Spleen (tissue), 13 donors: ENCODE measurements at regions of chr2 and their contacts with region 1.

Region 1: DNA sequence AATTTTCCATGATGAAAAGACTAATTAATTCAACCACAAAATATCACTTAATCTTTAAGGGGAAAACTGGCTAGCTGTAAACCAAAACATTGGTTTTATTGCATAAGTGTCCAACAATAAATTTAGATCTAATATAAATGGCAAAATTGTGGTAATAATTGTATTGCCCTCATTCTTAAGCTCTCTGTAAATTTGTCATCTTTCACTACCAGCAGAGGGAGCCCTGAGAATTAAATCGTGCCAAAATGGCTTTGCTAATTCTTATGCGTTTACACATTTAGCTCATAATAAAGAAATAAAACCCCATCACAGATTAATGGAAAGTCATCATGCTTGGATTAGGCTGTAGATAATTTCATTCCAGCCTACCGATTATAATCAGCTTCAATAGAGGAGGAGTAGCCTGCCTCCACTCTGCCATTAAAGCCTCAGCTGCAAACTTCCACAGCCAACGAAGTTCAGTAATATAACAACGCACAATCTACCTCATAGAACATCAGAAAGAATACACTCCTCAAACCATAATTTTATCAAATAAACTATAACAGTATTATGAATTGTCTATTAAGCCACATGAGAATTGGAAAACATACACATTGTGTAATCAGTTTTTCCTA is 70.0 kb upstream of the ATP5MC3 start:
- DNase-seq: no peak
- H3K4me3 ChIP-seq: no peak overlapping the region
- H3K27ac ChIP-seq: no peak overlapping the region
- H3K4me1 ChIP-seq: no peaks in the 10 kb centered on the region
- H3K27me3 ChIP-seq: peaks cover 0 to 33% (median 0%) of the 10 kb centered on the region in 7 donors
- CTCF ChIP-seq: peak in 8 of 11 experiments; percentile 21 to 56 (median 44)
- POLR2A ChIP-seq: no peak

Region 2: GRCh38 chr2:174561283-174561971 is 690.1 kb before region 1 on chr2:
- intact Hi-C with region 1: no loop called
- DNase-seq: no peak
- H3K4me3 ChIP-seq: no peak overlapping the region
- H3K27ac ChIP-seq: peak overlapping the region in 4 of 8 donors; percentile 17 to 31 (median 24)
- H3K4me1 ChIP-seq: peaks cover 0 to 14% (median 2%) of the 10 kb centered on the region in 6 donors
- H3K27me3 ChIP-seq: no peaks in the 10 kb centered on the region
- CTCF ChIP-seq: no peak
- POLR2A ChIP-seq: no peak

Region 3: GRCh38 chr2:175309799-175310198 is 58.3 kb after region 1 on chr2:
- intact Hi-C with region 1: no loop called
- DNase-seq: no peak
- H3K4me3 ChIP-seq: no peak overlapping the region
- H3K27ac ChIP-seq: no peak overlapping the region
- H3K4me1 ChIP-seq: no peaks in the 10 kb centered on the region
- H3K27me3 ChIP-seq: peaks cover 0 to 17% (median 0%) of the 10 kb centered on the region in 7 donors
- CTCF ChIP-seq: no peak
- POLR2A ChIP-seq: no peak

Region 4: DNA sequence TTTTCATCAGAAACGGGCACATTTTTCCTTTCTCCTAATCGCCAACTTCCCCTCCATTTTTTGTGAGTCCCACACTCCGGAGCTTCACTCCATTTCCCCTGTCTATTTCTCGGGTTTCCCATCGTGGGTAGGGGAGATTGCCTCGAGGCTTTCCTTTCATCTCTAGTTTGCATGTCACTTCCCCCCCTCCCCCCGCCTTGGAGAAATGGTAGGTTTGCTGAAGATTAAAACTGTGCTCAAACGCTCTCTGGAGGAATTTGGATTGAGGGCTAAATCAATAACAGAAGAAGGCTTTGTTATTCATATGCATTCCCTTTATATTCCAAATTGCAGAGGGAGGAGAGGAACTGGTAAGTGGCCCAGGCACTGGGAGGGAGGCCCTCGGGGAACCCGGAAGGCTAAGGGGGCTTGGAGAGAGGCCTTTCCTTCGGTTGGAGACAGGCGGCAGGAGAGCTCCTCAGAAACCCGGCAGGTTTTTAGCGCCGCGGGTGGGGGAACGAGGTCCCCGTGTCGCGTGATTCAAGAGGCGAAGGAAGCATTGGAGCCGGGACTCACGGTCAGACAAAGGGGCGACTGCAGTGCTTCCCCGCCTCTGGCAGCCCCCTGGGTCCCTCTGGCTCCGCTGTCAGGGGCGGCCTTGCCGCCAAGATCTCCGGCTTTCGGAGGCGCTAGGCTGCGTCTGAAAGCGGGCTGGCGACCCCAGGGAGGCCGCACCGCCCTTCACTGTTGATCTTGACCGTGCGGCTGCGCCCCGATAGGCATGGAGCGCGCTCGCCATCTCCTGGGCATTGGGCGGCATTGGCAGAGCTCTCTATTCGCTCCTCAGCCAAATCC is 845.7 kb after region 1 on chr2:
- intact Hi-C with region 1: loop called (anchors 5 kb)
- DNase-seq: peak; percentile 90
- H3K4me3 ChIP-seq: peak overlapping the region; percentile 15 to 67 (median 38)
- H3K27ac ChIP-seq: no peak overlapping the region
- H3K4me1 ChIP-seq: peaks cover 10 to 61% (median 49%) of the 10 kb centered on the region in 6 donors
- H3K27me3 ChIP-seq: peaks cover 28 to 100% (median 100%) of the 10 kb centered on the region in 7 donors
- CTCF ChIP-seq: peak; percentile 50 to 84 (median 76)
- POLR2A ChIP-seq: no peak